ENCODE measurements at regions of chr2 and their contacts with region 1.

Region 1: DNA sequence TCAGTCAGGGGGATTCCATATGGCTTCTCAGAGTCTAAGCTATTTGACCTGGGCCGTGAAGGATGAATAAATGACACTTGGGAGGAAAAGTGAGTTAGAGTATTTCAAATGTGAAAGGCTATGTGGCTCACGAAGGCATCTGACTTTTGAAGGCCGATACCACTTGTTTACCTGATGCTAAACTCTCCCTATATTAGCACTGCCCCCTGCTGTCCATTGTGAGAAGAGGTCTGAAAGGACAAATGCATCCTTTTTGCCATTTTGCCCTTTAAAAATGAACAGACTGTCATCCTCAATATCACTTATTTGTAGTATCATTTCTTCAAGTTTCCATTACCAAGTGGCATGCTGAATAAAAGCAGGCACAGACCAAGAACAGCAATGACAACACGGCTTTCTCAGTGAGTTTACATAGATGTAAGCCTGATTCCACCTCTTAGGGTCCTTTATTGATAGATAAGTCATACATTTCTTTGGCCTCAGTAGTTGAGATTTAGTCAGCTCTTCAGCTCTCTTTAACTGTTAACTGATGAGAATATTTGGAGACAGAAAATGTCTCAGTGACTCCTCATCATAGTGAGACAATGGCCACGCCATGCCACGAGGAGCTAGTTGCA is 40.1 kb downstream of the DOCK10 start:
- DNase-seq: peak in 3 of 5 donors; percentile 35 to 53 (median 38)
- H3K4me3 ChIP-seq: no peak overlapping the region
- H3K27ac ChIP-seq: no peak overlapping the region
- H3K4me1 ChIP-seq: peaks cover 9% of the 10 kb centered on the region
- H3K27me3 ChIP-seq: no peaks in the 10 kb centered on the region
- CTCF ChIP-seq: peak; percentile 41 to 56 (median 44)
- EP300 ChIP-seq: no peak
- POLR2A ChIP-seq: no peak

Region 2: GRCh38 chr2:224778474-224778877 is 223.7 kb before region 1 on chr2:
- intact Hi-C with region 1: loop called in 1 of 4 experiments (anchors 10 kb)
- DNase-seq: peak in 3 of 5 donors; percentile 26 to 59 (median 27)
- H3K4me3 ChIP-seq: no peak overlapping the region
- H3K27ac ChIP-seq: no peak overlapping the region
- H3K4me1 ChIP-seq: no peaks in the 10 kb centered on the region
- H3K27me3 ChIP-seq: no peaks in the 10 kb centered on the region
- CTCF ChIP-seq: peak; percentile 26 to 57 (median 49)
- EP300 ChIP-seq: no peak
- POLR2A ChIP-seq: no peak

Region 3: GRCh38 chr2:225192869-225193268 is 190.7 kb after region 1 on chr2:
- intact Hi-C with region 1: no loop called
- DNase-seq: no peak
- H3K4me3 ChIP-seq: no peak overlapping the region
- H3K27ac ChIP-seq: no peak overlapping the region
- H3K4me1 ChIP-seq: no peaks in the 10 kb centered on the region
- H3K27me3 ChIP-seq: no peaks in the 10 kb centered on the region
- CTCF ChIP-seq: no peak
- EP300 ChIP-seq: no peak
- POLR2A ChIP-seq: no peak